Aorta (tissue), 5 donors: ENCODE measurements at regions of chr19 and their contacts with region 1.

Region 1: DNA sequence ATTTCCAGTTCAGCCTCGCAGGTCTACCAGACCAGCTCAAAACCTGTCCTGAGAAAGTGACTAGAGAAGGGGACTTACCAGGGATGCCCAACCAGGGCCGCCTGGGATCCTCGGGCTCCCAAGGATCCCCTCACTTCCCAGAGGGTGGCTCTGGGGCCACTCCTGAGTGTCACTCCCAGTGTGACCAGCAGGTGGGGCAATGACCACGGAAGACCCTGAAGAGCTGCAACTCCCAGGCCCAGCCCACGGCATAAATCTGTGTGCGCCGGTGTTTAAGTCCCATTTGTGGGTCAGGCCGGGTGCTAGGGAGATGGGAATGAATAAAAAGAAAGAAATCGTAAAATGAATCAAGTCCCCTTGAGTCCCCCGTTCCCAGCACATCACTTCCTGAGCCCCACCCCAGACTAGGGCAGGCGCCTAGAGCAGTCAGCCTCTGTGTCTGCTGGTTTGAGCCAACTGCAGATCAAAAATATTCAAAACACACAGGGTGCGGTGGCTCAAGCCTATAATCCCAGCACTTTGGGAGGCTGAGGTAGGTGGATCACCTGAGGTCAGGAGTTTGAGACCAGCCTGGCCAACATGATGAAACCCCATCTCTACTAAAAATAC is 10.7 kb downstream of the PTGIR start:
- DNase-seq: peak; percentile 90 to 95
- ATAC-seq: peak; percentile 91
- H3K4me3 ChIP-seq: no peak overlapping the region
- H3K27ac ChIP-seq: no peak overlapping the region
- H3K4me1 ChIP-seq: peaks cover 0 to 2% of the 10 kb centered on the region in 2 donors
- H3K27me3 ChIP-seq: no peaks in the 10 kb centered on the region

Region 2: DNA sequence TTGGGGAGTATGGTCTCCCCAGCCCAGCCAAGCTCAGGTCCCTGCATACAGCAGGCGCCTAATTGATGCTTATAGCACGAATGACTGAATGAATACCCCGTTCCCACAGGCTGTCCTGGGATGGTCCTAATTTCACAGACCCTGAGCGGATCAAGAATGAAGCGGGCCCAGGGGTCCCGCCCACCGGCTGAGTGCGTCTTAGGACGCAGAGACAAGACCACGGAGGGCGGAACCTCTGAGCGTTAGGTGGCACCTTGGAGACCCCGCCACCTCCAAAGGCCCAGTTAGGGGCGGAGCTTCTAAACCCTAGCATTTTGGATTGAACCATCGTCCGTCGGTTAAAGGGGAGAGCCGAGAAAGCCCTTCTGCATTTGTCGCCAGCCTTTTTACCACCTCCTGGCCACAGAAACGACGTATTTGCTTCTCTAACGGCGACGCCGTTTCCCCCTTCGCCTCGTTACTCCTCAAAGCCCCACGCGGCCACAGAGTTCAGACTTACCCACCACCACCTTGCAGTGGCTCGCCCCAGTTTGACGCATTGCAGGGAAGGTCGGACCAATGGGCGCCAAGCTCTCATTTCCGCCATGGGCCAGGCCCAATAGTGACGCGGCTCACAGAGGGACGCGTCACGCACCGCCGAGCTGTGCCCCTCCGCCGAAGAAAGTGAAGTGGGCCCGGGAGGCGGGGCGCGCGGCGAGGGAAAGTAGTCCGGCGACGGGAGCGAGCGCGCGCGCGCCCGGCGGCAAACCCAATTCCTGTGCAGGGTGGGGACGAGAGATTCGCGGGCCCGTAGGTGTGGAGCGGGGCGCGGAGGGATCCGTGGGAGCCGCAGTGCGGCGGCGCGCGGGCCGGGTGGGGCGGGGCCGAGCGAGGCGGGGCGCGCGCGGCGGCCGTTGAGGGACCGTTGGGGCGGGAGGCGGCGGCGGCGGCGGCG is 13.6 kb before region 1 on chr19:
- intact Hi-C with region 1: loop called in 1 of 2 experiments (anchors 1 kb)
- DNase-seq: peak; percentile 98 to 99
- ATAC-seq: peak; percentile 94
- H3K4me3 ChIP-seq: peak overlapping the region; percentile 44 to 89
- H3K27ac ChIP-seq: peak overlapping the region; percentile 8 to 91
- H3K4me1 ChIP-seq: peaks cover 0 to 2% of the 10 kb centered on the region in 2 donors
- H3K27me3 ChIP-seq: no peaks in the 10 kb centered on the region

Region 3: GRCh38 chr19:46661735-46662592 is 47.7 kb after region 1 on chr19:
- intact Hi-C with region 1: loop called (anchors 1 to 2 kb)
- DNase-seq: peak; percentile 91 to 94
- ATAC-seq: peak; percentile 89
- H3K4me3 ChIP-seq: peak overlapping the region in 1 of 2 donors; percentile 13
- H3K27ac ChIP-seq: peak overlapping the region in 1 of 2 donors; percentile 61
- H3K4me1 ChIP-seq: no peaks in the 10 kb centered on the region
- H3K27me3 ChIP-seq: no peaks in the 10 kb centered on the region